ENCODE measurements at regions of chr6 and their contacts with region 1.

Region 1: GRCh38 chr6:50816115-50816675 is 2.5 kb upstream of the TFAP2B start:
- DNase-seq: peak; percentile 73 to 87
- H3K4me3 ChIP-seq: peak overlapping the region; percentile 29 to 64 (median 53)
- H3K27ac ChIP-seq: peak overlapping the region; percentile 78 to 98
- H3K4me1 ChIP-seq: no peaks in the 10 kb centered on the region
- H3K27me3 ChIP-seq: peaks cover 0 to 11% of the 10 kb centered on the region in 2 donors
- CTCF ChIP-seq: peak; percentile 81 to 83 (median 81)
- POLR2A ChIP-seq: no peak

Region 2: GRCh38 chr6:48962041-48962440 is 1854.2 kb before region 1 on chr6:
- intact Hi-C with region 1: no loop called
- DNase-seq: no peak
- H3K4me3 ChIP-seq: no peak overlapping the region
- H3K27ac ChIP-seq: no peak overlapping the region
- H3K4me1 ChIP-seq: no peaks in the 10 kb centered on the region
- H3K27me3 ChIP-seq: no peaks in the 10 kb centered on the region
- CTCF ChIP-seq: no peak
- POLR2A ChIP-seq: no peak

Region 3: DNA sequence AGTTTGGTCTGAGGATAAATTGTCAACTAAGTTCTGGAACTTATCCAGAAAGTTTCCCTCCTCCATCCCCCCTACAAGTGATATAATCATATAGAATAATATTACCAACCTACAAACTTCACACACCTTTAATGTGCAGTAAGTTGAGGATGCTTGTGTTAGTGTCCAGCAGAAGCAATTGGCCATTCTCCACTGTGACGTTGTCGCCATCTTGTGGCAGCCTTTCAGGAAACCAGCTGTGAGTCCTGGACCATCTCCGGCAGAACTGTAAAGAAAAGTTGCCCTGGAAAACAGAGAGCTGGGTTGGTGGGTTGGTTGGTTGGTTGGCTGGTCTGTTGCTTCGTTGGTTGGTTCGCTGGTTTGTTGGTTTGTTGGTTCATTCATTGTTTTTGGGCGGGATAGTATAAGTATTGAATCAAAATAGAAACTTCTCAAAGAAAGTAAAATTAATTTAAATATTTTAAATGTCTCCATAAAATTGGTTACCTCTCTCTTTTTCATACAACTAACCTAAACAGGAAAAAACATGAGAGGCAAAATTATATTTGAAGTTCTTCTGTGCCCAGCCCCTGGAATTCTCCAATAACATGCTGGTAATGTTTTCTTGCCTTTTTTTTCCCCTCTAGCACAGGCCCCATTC is 1143.7 kb after region 1 on chr6:
- intact Hi-C with region 1: loop called (anchors 5 kb)
- DNase-seq: peak; percentile 60 to 79
- H3K4me3 ChIP-seq: no peak overlapping the region
- H3K27ac ChIP-seq: no peak overlapping the region
- H3K4me1 ChIP-seq: no peaks in the 10 kb centered on the region
- H3K27me3 ChIP-seq: no peaks in the 10 kb centered on the region
- CTCF ChIP-seq: peak in 2 of 3 donors; percentile 66 to 73
- POLR2A ChIP-seq: no peak

Measured in breast epithelium (tissue), 4 donors.